A549 (cell line): ENCODE measurements at regions of chr2 and their contacts with region 1.

Region 1: GRCh38 chr2:64888591-64889309 is 100.4 kb upstream of the SLC1A4 start:
- DNase-seq: peak; percentile 83 to 85
- ATAC-seq: peak; percentile 94 to 97
- H3K4me3 ChIP-seq: no peak overlapping the region
- H3K27ac ChIP-seq: no peak overlapping the region
- H3K4me1 ChIP-seq: 0 out of 3 replicates have a peak, but pooled peaks cover 3% of the 10 kb centered on the region
- CTCF ChIP-seq: peak; percentile 80
- EP300 ChIP-seq: no peak
- POLR2A ChIP-seq: no peak
- RAD21 ChIP-seq: peak; percentile 90 to 91

Region 2: GRCh38 chr2:64052468-64053241 is 836.1 kb before region 1 on chr2:
- CTCF ChIA-PET with region 1: interaction called, 13 read pairs
- POLR2A ChIA-PET with region 1: no interaction called
- DNase-seq: no peak
- ATAC-seq: no peak
- H3K4me3 ChIP-seq: no peak overlapping the region
- H3K27ac ChIP-seq: no peak overlapping the region
- H3K4me1 ChIP-seq: no peaks in the 10 kb centered on the region
- CTCF ChIP-seq: no peak
- EP300 ChIP-seq: no peak
- POLR2A ChIP-seq: no peak
- RAD21 ChIP-seq: no peak

Region 3: DNA sequence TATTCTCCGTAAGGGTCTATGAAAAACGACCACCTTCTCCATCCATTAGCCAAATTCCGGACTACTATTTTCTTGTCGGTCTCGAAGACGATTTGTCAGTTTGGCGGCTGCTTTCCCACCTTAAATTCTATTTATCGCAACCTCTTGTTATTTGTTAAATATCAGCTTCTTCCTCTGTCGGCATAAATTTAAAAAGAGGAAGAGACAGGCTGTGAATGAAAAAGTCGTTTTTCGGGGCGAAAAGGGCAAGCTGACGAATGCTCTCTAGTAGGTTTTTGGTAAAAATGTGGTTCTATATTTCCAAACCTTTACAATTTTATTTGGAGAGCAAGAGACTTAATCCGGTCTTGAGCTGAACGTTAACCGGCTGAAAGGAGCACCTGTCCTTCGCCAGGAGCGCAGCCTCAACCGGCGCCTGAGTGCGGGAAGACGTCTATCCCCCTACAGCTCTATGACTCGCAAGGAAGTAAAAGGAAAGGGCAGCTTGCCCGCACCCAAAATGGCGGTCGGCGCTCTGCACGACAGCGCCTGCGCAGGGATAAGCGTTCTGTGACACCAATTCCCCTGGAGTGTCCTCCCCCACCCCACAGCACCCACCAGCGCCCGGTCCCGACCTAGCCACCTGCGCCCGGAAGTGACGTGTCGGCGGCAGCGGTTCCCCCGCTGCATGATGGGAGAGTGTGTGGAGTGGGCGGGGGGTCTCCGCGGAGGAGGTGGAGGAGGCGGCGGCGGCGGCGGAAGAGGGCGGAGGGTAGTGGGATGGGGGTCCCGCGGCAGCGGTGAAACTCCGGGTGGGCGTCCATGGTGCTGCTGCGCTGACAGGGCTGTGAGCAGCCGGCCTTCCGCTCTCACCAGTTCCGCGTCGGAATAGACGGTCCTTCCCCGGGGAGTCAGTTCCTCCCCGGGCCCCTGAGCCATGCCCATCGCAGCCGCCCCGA is 364.8 kb before region 1 on chr2 and contains the start of gene AFTPH:
- CTCF ChIA-PET with region 1: interaction called, 21 read pairs
- POLR2A ChIA-PET with region 1: no interaction called
- DNase-seq: peak; percentile 98 to 99
- ATAC-seq: peak; percentile 95 to 98
- H3K4me3 ChIP-seq: peak within 1 kb of the TSS; percentile 89
- H3K27ac ChIP-seq: peak within 1 kb of the TSS; percentile 86 to 96
- H3K4me1 ChIP-seq: peaks cover 15% of the 10 kb centered on the region; the same call in 2 of the 3 replicates
- CTCF ChIP-seq: no peak; the same call in 2 of the 3 replicates
- EP300 ChIP-seq: no peak
- POLR2A ChIP-seq: peak; percentile 61
- RAD21 ChIP-seq: no peak
- polyA plus RNA-seq, gene AFTPH: 51.4 and 56.6 TPM in 2 replicates

Region 4: DNA sequence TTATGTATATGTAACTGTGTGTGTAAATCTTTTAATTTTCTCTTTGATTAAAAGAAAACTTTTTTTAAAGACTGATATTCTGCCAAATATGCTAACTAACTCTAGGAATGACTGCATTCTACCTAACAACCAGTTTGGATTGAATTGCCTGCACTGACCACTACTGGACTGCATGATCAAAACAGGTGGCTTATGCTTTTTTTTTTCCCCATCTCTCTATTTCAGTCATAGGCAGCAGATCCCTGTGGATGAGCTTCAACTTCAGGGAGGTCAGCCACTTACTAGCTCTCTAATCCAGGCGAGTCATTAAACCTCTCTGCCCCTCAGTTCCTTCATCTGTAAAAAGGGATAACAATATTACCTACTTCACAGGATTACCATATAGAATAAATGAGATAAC is 96.4 kb before region 1 on chr2:
- CTCF ChIA-PET with region 1: no interaction called
- POLR2A ChIA-PET with region 1: no interaction called
- DNase-seq: peak in 1 of 2 experiments; percentile 41
- ATAC-seq: peak; percentile 51 to 70; a peak in 3 of 6 replicates
- H3K4me3 ChIP-seq: no peak overlapping the region
- H3K27ac ChIP-seq: no peak overlapping the region
- H3K4me1 ChIP-seq: peaks cover 10% of the 10 kb centered on the region
- CTCF ChIP-seq: no peak
- EP300 ChIP-seq: no peak
- POLR2A ChIP-seq: no peak
- RAD21 ChIP-seq: peak in 1 of 2 experiments; percentile 21; a peak in 1 of 5 replicates

Region 5: DNA sequence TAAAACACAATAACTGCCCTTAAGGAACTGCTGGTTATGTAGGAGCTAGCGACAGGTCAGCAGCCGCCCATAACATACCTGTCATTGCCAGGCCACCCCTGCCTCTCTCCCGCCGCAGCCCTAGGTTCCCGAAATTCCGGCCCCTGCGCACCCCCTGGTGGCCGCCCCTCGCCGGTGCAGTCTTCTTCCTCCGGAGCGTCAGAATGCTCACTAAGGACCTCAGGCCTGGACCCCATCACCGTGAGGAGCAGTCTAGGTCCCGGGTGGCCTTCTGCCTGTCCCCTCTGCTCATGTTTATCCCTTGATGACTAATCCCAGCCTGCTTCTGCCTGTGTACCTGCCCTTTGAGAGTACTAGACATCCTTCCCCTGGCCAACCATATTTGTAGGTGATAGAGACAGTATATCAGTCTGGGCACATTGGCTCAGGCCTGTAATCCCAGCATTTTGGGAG is 15.3 kb before region 1 on chr2:
- CTCF ChIA-PET with region 1: interaction called, 25 read pairs
- POLR2A ChIA-PET with region 1: no interaction called
- DNase-seq: peak; percentile 65 to 73
- ATAC-seq: peak; percentile 83 to 94
- H3K4me3 ChIP-seq: no peak overlapping the region
- H3K27ac ChIP-seq: no peak overlapping the region
- H3K4me1 ChIP-seq: peaks cover 15% of the 10 kb centered on the region
- CTCF ChIP-seq: peak; percentile 95
- EP300 ChIP-seq: no peak
- POLR2A ChIP-seq: no peak
- RAD21 ChIP-seq: peak; percentile 94 to 97

Region 6: DNA sequence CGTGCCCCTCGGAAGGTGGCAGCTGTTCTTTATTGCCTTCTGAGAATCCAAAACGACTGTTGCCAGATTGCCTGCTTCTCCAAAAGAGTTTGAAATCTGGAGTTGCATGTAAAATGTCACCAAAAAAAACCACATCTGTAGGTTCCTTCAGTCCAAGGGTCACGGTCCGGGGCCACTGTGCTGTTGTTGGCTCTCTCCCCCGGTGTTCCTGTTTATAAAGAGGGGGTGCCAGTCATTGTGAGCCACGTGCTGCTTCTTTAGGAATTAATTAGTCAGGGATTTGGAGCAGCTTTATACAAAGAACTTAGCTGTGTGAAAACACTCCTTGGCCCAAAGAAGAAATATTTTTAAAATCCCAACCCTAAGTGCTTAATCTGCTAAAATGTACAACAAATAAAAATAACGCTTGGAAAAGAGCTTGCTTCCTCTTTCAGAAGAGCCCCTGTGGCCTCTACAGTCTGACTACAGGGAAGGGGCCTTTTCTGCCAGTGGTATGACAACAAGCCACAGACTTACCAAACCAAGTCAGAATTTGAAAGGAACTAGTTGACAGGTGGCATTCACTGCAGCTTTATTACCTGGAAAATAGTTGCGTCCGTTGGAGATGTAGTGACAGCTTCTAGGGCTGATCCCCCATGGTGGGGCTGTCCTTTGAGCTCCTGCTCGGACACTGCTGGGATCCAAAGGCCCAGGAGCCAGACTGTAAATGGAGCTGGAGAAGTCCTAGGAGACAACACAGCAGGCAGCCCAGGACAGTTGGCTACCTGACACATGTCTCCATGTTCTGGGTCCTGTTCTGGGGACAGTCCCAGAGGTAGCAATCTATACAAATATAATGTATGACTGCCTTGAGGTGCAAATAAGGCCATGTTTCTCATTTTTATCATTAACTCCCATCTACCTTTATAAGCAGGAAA is 15.9 kb after region 1 on chr2:
- CTCF ChIA-PET with region 1: interaction called, 27 read pairs
- POLR2A ChIA-PET with region 1: no interaction called
- DNase-seq: no peak
- ATAC-seq: no peak
- H3K4me3 ChIP-seq: no peak overlapping the region
- H3K27ac ChIP-seq: no peak overlapping the region
- H3K4me1 ChIP-seq: no peaks in the 10 kb centered on the region
- CTCF ChIP-seq: no peak
- EP300 ChIP-seq: no peak
- POLR2A ChIP-seq: no peak
- RAD21 ChIP-seq: no peak

Region 7: DNA sequence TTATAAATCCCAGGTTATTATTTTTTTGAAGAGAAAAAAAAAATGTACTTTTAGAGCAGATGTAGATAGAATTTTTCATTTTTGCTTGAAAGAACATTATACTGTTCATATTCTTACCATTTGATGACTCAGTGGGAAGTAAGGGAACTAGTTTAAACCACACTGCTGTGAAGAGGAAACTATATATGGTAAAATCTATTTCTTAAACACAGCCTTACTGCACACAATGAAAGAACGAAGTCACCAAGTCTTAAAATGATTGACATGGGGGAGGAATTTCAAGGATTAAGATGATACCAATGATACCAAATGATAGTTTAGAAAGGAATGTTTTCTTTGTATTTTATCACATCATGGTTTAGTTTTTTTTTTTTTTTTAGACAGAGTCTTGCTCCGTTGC is 343.9 kb after region 1 on chr2:
- CTCF ChIA-PET with region 1: no interaction called
- POLR2A ChIA-PET with region 1: no interaction called
- DNase-seq: peak in 1 of 2 experiments; percentile 26
- ATAC-seq: no peak
- H3K4me3 ChIP-seq: no peak overlapping the region
- H3K27ac ChIP-seq: no peak overlapping the region
- H3K4me1 ChIP-seq: peaks cover 36% of the 10 kb centered on the region
- CTCF ChIP-seq: no peak
- EP300 ChIP-seq: no peak
- POLR2A ChIP-seq: no peak
- RAD21 ChIP-seq: no peak